Ascending aorta (tissue), 2 donors: ENCODE measurements at regions of chr22 and their contacts with region 1.

Region 1: GRCh38 chr22:28594797-28595462 is 84.7 kb downstream of the TTC28 start:
- DNase-seq: no peak
- H3K4me3 ChIP-seq: no peak overlapping the region
- H3K27ac ChIP-seq: no peak overlapping the region
- H3K4me1 ChIP-seq: no peaks in the 10 kb centered on the region
- H3K27me3 ChIP-seq: no peaks in the 10 kb centered on the region
- CTCF ChIP-seq: peak; percentile 62 to 75 (median 75)

Region 2: DNA sequence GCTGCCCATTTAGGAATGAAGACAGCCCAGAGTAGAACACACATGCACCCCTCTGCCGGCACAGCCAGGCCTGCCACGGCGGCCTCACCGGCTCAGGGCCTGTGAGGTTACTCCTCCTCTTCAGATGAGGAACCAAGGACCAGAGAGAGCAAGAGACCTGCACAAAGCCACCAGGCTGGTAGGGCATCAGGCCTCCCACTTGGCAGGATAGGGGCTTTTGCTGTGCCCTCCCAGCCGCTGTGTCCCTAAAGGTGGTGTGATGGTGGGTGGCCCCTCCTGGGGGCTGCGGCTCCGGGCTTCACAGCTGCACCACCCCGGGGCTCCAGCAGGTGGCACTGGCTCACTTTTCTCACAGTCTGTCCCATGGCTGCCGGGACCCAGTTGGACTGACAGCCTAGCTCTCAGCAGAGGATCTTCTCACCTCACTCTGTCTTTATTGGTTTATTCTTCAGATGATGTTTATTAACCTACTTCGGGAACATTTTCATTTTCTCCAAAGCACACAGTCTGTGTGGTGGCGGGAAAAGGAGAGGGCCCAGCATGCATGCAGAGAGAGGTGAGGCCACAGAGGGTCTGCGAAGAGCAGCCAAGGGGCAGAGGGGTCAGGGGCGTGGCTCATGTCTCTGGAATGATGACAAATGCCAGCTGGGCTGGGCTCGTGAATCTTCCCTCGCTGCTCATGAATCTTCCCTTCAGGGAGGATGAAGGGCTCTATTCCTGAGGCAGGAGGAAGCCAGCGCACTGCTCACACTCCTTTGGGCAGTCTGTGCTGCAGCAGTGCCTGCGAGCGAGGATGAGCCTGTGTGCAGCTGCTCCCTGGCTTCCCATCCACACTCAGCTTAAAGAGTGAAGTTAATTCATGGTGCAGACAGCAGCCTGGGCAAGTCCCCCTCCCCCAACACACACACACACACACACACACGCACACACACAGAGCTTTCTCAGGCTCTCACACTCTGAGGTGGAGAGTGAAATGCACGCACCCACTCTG is 574.8 kb before region 1 on chr22:
- intact Hi-C with region 1: loop called (anchors 1 kb)
- DNase-seq: peak in 1 of 2 donors; percentile 81
- H3K4me3 ChIP-seq: no peak overlapping the region
- H3K27ac ChIP-seq: no peak overlapping the region
- H3K4me1 ChIP-seq: no peaks in the 10 kb centered on the region
- H3K27me3 ChIP-seq: no peaks in the 10 kb centered on the region
- CTCF ChIP-seq: peak; percentile 78 to 95 (median 92)

Region 3: DNA sequence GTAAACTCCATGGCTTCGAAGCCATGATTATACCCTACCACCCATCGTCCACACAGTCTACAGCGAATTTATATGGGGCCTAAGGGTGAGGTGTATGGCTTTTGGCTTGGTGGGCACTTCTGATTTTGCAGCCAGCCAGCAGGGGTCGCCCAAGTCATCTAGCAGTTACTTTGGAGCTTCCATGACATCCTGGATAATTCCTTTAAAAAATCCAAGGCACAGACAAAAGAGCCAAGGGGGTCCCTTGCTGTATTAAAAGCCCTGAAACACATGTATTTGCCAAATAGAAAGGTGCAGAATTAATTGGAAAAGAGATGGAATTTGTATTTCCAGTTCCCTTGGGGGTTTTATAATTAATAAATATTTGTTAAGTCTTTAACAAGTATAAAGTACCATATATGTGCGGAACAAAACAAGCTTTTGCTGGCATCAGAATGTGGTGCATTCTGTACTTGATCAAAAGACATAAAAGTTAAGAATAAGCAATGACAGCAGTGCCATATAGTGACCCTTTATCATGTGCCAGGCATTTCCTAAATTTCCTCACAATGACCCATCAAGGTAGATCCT is 543.1 kb before region 1 on chr22:
- intact Hi-C with region 1: loop called (anchors 1 kb)
- DNase-seq: peak in 1 of 2 donors; percentile 77
- H3K4me3 ChIP-seq: no peak overlapping the region
- H3K27ac ChIP-seq: no peak overlapping the region
- H3K4me1 ChIP-seq: no peaks in the 10 kb centered on the region
- H3K27me3 ChIP-seq: no peaks in the 10 kb centered on the region
- CTCF ChIP-seq: peak; percentile 74 to 89 (median 81)

Region 4: GRCh38 chr22:28570691-28571373 is 24.1 kb before region 1 on chr22:
- intact Hi-C with region 1: no loop called
- DNase-seq: no peak
- H3K4me3 ChIP-seq: no peak overlapping the region
- H3K27ac ChIP-seq: no peak overlapping the region
- H3K4me1 ChIP-seq: no peaks in the 10 kb centered on the region
- H3K27me3 ChIP-seq: no peaks in the 10 kb centered on the region
- CTCF ChIP-seq: no peak